Mammary epithelial cell (primary cell): ENCODE measurements at regions of chr15 and their contacts with region 1.

Region 1: DNA sequence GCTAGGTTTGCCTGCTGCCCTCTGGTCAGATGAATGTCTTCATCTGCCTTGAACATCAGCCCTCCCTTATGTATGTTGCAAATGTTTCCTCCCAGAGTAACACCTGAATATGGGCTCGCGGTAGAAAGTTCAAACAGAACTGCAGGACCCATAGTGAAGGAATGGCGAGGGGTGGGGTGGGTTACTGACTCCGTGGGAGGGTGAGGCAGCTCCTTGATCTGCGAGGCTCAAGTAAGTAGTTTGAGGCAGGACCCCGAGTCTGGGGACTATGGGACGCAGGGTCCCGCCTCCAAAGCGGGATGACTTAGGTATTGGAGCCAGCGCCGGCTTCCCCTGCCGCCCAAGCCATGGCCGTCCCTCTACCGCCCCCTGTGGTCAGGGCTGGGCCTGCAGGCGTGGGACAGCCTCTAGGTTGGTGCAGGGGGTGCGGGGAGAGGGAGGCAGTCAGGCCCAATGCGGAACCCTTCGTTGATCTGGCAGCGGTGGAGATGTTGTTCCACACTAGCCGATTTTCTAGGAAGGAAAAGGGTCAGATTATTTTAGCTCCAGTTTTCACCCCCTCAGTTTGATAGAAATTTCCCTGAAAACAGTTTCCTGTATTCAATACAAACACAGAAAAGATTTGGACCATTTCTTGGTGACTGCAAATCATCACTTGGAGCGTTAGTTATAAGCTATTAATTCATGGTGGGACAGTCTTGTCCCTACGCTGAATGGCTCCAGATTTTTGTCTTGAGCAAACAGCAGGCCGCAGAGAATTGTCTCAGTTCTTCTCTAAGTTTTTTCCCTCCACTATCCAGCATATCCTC is 72.3 kb downstream of the CORO2B start:
- DNase-seq: no peak
- H3K4me3 ChIP-seq: no peak overlapping the region
- H3K27ac ChIP-seq: no peak overlapping the region
- H3K4me1 ChIP-seq: no peaks in the 10 kb centered on the region
- H3K27me3 ChIP-seq: no peaks in the 10 kb centered on the region
- CTCF ChIP-seq: peak; percentile 42 to 52

Region 2: DNA sequence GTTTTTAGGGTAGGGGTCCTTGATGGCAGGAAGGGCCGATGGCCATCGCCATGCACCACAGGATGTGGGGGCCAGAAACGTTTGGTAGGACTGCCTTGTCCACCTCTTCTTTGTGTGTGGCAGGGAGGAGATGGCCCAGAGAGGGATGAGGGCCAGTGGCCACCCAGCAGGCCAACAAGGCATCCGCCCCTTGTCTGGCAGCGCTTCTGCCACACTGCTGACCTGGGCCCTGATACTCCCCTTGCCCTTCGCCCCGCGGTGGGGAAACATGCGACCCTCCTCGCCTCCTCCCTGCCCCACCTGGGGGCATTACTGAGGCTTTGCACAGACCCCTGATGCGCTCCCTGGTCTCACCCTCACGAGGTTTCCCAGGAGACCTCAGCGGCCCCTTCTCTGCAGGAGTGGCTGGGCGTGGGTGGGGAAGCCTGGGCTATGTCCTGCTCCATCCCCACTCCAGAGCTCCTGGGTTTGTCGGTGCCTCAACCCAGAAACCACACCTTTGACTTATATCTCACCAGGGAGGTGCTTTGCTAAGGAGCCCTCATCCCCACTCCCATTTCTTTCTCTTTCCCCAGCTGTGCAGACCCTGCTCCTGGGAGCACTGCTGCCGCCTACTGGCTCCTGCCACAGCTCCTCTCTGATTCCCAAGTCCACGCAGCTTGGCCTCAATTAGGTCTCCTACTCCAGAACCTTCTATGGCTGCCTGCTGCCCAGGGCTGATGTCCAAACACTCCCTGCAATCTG is 334.9 kb before region 1 on chr15:
- CTCF ChIA-PET with region 1: no interaction called
- dilution Hi-C with region 1: no loop called
- in situ Hi-C with region 1: loop called in 1 of 2 experiments (anchors 25 kb)
- intact Hi-C with region 1: no loop called
- DNase-seq: no peak
- H3K4me3 ChIP-seq: no peak overlapping the region
- H3K27ac ChIP-seq: no peak overlapping the region
- H3K4me1 ChIP-seq: peaks cover 11% of the 10 kb centered on the region
- H3K27me3 ChIP-seq: no peaks in the 10 kb centered on the region
- CTCF ChIP-seq: no peak